IMR-90 (cell line): ENCODE measurements at regions of chr6 and their contacts with region 1.

Region 1: DNA sequence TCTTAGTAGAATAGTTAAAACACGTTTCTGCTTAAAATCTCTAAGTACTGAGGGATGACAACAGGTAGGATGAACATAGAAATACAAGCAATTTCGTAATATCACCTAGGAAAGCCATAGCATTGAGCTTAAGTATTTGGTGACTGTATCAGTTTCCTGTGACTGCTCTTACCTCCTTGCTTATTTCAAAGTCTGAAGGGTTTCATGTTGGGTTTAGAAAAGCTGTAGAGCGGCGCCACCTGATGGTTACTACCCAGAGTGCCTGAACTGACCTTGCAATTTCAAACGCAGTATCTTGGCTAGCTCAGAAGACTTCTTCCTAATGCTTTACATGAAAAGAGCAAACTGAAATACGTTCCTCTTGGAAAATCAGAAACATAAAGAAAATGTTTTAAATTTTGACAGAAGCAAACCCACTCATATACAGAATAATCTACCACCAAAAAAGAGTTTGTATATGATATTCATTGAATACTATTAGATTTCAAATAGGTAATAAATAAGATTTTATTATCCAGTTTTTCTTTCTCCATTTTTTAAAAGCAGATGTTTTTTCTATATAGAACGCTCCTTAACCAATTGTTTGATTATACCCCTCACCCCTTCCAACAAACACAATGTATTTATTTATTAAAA is 82.3 kb upstream of the RIPOR2 start:
- DNase-seq: peak; percentile 65
- ATAC-seq: 0 out of 2 replicates have a peak, but pooled peaks have one; percentile 22
- H3K4me3 ChIP-seq: no peak overlapping the region
- H3K27ac ChIP-seq: no peak overlapping the region
- H3K4me1 ChIP-seq: peaks cover 12% of the 10 kb centered on the region
- H3K27me3 ChIP-seq: no peaks in the 10 kb centered on the region
- CTCF ChIP-seq: peak; percentile 67
- POLR2A ChIP-seq: no peak
- RAD21 ChIP-seq: peak; percentile 82

Region 2: GRCh38 chr6:24774696-24775519 is 243.1 kb before region 1 on chr6 and contains the start of gene GMNN:
- CTCF ChIA-PET with region 1: no interaction called
- POLR2A ChIA-PET with region 1: no interaction called
- dilution Hi-C with region 1: no loop called
- in situ Hi-C with region 1: no loop called
- intact Hi-C with region 1: loop called (anchors 5 kb)
- DNase-seq: peak; percentile 89
- ATAC-seq: peak; percentile 93
- H3K4me3 ChIP-seq: peak within 1 kb of the TSS; percentile 87
- H3K27ac ChIP-seq: peak within 1 kb of the TSS; percentile 83
- H3K4me1 ChIP-seq: peaks cover 8% of the 10 kb centered on the region
- H3K27me3 ChIP-seq: no peaks in the 10 kb centered on the region
- CTCF ChIP-seq: no peak
- POLR2A ChIP-seq: peak; percentile 73; the same call in 1 of the 2 replicates
- RAD21 ChIP-seq: no peak
- total RNA-seq, gene GMNN: 19.7 and 33.1 TPM in 2 replicates

Region 3: GRCh38 chr6:25094726-25095125 is 76.7 kb after region 1 on chr6:
- CTCF ChIA-PET with region 1: no interaction called
- POLR2A ChIA-PET with region 1: interaction called, 17 read pairs
- dilution Hi-C with region 1: no loop called
- in situ Hi-C with region 1: no loop called
- intact Hi-C with region 1: no loop called
- DNase-seq: no peak
- ATAC-seq: no peak
- H3K4me3 ChIP-seq: no peak overlapping the region
- H3K27ac ChIP-seq: no peak overlapping the region
- H3K4me1 ChIP-seq: no peaks in the 10 kb centered on the region
- H3K27me3 ChIP-seq: no peaks in the 10 kb centered on the region
- CTCF ChIP-seq: no peak
- POLR2A ChIP-seq: no peak
- RAD21 ChIP-seq: no peak